ENCODE measurements at regions of chr6 and their contacts with region 1.

Region 1: DNA sequence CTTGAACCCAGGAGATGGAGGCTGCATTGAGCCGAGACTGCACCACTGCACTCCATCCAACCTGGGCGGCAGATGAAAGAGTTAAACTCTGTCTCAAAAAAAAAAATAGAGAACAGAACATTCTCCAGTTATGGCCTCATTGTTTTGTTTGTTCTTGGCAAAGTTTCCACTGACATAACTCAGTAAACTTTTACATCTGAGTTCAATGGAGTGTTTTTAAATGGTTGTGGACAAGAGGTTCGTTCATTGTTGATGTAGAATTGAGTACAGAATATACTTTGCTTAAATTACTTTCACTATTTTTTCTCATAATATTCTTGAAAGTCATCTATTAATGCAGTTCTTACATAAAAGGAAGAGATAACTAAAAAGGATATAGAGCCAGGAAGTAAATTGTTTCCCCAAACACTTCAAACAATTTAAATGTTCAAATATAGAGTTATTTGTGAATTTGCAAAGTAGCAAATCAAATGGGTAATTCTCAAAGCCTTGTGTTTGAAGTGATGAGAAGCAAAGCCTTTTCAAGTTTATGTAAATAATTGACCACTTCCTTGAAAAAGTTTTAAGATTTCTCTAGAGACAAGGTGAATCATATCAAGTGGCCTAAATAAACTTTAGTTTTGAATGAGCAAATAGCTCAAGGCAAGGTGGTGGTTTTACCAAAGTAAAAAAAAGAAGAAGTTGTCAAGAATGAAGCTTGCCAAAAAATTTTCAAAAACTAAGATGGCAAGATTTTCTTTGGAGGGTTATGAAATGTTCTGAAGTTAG is 42.4 kb upstream of the IFNGR1 start:
- DNase-seq: no peak
- ATAC-seq: no peak
- H3K4me3 ChIP-seq: no peak overlapping the region
- H3K27ac ChIP-seq: no peak overlapping the region
- H3K4me1 ChIP-seq: peaks cover 0 to 2% of the 10 kb centered on the region in 2 donors
- H3K27me3 ChIP-seq: no peaks in the 10 kb centered on the region

Region 2: GRCh38 chr6:137165375-137166246 is 96.0 kb before region 1 on chr6:
- intact Hi-C with region 1: loop called in 1 of 2 experiments (anchors 10 kb)
- DNase-seq: no peak
- ATAC-seq: no peak
- H3K4me3 ChIP-seq: no peak overlapping the region
- H3K27ac ChIP-seq: no peak overlapping the region
- H3K4me1 ChIP-seq: no peaks in the 10 kb centered on the region
- H3K27me3 ChIP-seq: no peaks in the 10 kb centered on the region

Region 3: GRCh38 chr6:138052757-138053156 is 791.2 kb after region 1 on chr6:
- intact Hi-C with region 1: no loop called
- DNase-seq: no peak
- ATAC-seq: no peak
- H3K4me3 ChIP-seq: no peak overlapping the region
- H3K27ac ChIP-seq: no peak overlapping the region
- H3K4me1 ChIP-seq: no peaks in the 10 kb centered on the region
- H3K27me3 ChIP-seq: no peaks in the 10 kb centered on the region